MCF 10A (cell line): ENCODE measurements at regions of chr3 and their contacts with region 1.

Region 1: GRCh38 chr3:157311633-157312375 is 124.8 kb upstream of the PTX3 start:
- DNase-seq: peak; percentile 83
- H3K4me3 Mint-ChIP-seq: no peak overlapping the region
- H3K27ac Mint-ChIP-seq: peak overlapping the region; percentile 75
- H3K4me1 Mint-ChIP-seq: peaks cover 8% of the 10 kb centered on the region
- H3K27me3 Mint-ChIP-seq: no peaks in the 10 kb centered on the region
- CTCF ChIP-seq: no peak

Region 2: DNA sequence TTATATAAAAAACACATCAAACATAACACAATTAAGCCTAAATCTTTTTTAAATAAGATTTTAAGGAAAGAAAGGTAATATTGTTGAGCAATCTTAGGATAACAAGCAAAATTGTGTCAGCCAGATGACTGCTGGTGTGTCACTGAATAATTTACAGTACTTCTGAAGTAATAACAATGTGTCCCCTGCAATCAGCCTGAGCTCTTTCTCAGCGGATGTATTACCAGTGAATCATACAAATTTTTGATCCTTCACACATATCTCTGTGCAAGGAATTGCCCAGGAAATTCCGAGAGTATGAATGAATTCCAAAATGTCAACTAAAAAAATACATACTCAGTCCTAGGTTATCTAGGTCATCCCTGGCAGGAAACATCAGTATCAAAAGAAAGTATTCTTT is 48.2 kb after region 1 on chr3:
- CTCF ChIA-PET with region 1: no interaction called
- POLR2A ChIA-PET with region 1: no interaction called
- intact Hi-C with region 1: loop called (anchors 1 kb)
- DNase-seq: peak; percentile 74
- H3K4me3 Mint-ChIP-seq: no peak overlapping the region
- H3K27ac Mint-ChIP-seq: no peak overlapping the region
- H3K4me1 Mint-ChIP-seq: peaks cover 19% of the 10 kb centered on the region
- H3K27me3 Mint-ChIP-seq: no peaks in the 10 kb centered on the region
- CTCF ChIP-seq: no peak